Activated CD8-positive, alpha-beta T cell treated with anti-CD3 and anti-CD28 coated beads for 36 hours (primary cell): ENCODE measurements at regions of chr1 and their contacts with region 1.

Region 1: GRCh38 chr1:95043141-95043980 is 29.4 kb downstream of the ALG14 start:
- DNase-seq: peak; percentile 91
- ATAC-seq: peak; percentile 97
- H3K4me3 Mint-ChIP-seq: no peak overlapping the region
- H3K27ac Mint-ChIP-seq: no peak overlapping the region
- H3K4me1 Mint-ChIP-seq: no peaks in the 10 kb centered on the region
- H3K27me3 Mint-ChIP-seq: no peaks in the 10 kb centered on the region
- CTCF ChIP-seq: peak; percentile 98

Region 2: DNA sequence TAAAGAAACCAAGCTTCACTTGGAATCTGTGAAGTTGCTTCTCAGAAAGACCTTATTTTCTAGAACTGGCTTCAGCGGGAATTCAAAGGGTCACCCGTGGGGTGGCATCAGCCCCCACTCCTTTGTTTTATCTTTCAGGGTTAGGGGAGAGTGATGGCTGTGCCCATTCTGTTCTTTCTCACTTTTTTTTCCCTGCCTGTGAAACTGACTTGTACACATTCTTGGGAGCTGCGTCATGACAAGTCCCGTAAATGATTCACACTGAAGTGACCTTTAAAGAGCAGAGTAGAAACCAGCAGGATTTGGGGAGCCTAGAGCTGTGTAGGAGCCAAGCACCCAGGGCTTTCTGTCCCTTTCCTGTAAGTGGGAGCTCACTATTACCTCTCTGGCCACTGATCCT is 179.4 kb before region 1 on chr1:
- CTCF ChIA-PET with region 1: interaction called, 13 read pairs
- POLR2A ChIA-PET with region 1: no interaction called
- intact Hi-C with region 1: no loop called
- DNase-seq: no peak
- ATAC-seq: no peak
- H3K4me3 Mint-ChIP-seq: no peak overlapping the region
- H3K27ac Mint-ChIP-seq: no peak overlapping the region
- H3K4me1 Mint-ChIP-seq: no peaks in the 10 kb centered on the region
- H3K27me3 Mint-ChIP-seq: peaks cover 2% of the 10 kb centered on the region
- CTCF ChIP-seq: no peak

Region 3: DNA sequence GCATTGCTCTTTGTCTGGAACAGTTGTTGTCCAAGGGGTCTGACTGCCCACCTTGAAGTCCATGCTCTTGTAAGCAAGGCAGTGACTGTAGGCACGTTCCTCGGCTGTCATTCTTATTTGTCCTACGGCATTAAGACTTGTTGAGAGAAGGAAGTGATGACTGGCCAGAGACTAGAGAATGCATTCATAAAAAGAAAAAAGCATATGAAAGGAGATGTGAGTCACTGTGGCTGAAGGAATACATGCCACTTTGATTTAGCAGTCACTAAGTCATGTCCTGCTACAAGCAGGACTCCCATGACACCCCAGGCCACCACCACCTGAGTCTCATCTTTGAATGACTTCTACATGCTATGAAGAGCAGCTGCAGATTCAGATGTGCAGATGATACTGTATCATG is 167.0 kb before region 1 on chr1:
- CTCF ChIA-PET with region 1: interaction called, 10 read pairs
- POLR2A ChIA-PET with region 1: no interaction called
- intact Hi-C with region 1: no loop called
- DNase-seq: no peak
- ATAC-seq: no peak
- H3K4me3 Mint-ChIP-seq: no peak overlapping the region
- H3K27ac Mint-ChIP-seq: no peak overlapping the region
- H3K4me1 Mint-ChIP-seq: peaks cover 10% of the 10 kb centered on the region
- H3K27me3 Mint-ChIP-seq: no peaks in the 10 kb centered on the region
- CTCF ChIP-seq: no peak